ENCODE measurements at regions of chr20 and their contacts with region 1.

Region 1: DNA sequence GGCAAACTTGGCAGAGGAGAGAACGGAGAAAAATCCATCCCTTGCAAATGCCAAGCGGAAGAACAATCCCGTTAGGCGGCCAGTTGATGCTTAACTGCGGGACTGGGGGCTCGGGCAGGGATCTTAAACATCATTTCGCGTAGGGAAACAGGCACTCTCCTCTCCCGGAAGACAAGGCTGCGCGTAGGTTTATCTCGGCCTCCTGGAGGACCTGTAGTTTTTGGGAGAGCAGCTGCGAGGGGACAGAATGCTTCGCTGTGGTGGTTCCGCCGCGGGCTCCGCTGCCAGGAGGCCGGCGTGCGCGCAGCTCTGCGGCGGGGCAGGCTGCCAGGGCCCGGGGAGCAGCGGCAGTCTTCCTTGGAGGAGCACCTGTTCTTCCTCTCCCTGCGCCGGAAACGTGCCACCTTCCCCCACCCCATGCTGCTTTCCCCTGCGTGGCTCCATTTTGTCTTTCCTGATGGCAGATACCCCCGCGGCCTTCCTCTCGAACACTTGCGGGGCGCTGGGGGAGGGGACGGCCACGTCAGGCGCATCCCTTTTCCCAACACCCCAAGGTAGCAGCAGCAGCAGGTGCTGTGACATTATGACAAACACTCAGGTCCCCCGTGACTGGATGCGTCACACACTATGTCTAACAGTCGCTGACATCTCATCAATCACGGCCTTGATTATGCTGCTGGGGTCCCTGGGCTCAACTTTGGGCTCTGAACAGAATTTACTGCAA is 230.7 kb upstream of the BTBD3 start:
- DNase-seq: peak; percentile 55
- H3K4me3 Mint-ChIP-seq: peak overlapping the region; percentile 69
- H3K27ac Mint-ChIP-seq: peak overlapping the region; percentile 81
- H3K4me1 Mint-ChIP-seq: peaks cover 26% of the 10 kb centered on the region
- H3K27me3 Mint-ChIP-seq: no peaks in the 10 kb centered on the region
- CTCF ChIP-seq: no peak

Region 2: DNA sequence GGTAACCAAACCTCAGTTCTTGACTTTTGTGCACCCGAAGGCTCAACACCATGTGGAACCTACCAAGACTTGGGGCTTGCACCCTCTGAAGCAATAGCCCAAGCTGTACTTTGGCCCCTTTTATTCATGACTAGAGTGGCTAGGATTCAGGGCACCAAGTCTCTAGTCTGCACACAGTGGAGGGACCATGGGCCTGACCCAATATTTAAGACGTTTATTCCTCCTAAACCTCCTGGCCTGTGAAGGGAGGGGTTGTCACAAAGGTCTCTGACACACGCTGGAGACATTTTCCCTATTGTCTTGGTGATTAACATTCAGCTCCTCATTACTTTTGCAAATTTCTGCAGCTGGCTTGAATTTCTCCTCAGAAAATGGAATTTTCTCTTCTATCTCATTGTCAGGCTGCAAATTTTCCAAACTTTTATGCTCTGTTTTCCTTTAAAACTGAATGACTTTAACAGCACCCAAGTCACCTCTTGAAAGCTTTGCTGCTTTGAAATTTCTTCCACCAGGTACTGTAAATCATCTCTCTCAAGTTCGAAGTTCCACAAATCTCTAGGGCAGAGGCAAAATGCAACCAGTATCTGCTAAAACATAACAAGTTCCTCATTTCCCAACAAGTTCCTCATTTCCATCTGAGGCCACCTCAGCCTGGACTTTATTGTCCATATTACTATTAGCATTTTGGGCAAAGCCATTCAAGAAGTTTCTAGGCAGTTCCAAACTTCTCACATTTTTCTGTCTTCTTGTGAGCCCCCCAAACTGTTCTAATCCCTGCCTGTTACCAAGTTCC is 250.7 kb before region 1 on chr20:
- CTCF ChIA-PET with region 1: no interaction called
- intact Hi-C with region 1: no loop called
- DNase-seq: no peak
- H3K4me3 Mint-ChIP-seq: no peak overlapping the region
- H3K27ac Mint-ChIP-seq: no peak overlapping the region
- H3K4me1 Mint-ChIP-seq: no peaks in the 10 kb centered on the region
- H3K27me3 Mint-ChIP-seq: no peaks in the 10 kb centered on the region
- CTCF ChIP-seq: no peak

Region 3: GRCh38 chr20:11626551-11626950 is 60.4 kb before region 1 on chr20:
- CTCF ChIA-PET with region 1: no interaction called
- intact Hi-C with region 1: no loop called
- DNase-seq: no peak
- H3K4me3 Mint-ChIP-seq: no peak overlapping the region
- H3K27ac Mint-ChIP-seq: no peak overlapping the region
- H3K4me1 Mint-ChIP-seq: no peaks in the 10 kb centered on the region
- H3K27me3 Mint-ChIP-seq: no peaks in the 10 kb centered on the region
- CTCF ChIP-seq: no peak

Region 4: DNA sequence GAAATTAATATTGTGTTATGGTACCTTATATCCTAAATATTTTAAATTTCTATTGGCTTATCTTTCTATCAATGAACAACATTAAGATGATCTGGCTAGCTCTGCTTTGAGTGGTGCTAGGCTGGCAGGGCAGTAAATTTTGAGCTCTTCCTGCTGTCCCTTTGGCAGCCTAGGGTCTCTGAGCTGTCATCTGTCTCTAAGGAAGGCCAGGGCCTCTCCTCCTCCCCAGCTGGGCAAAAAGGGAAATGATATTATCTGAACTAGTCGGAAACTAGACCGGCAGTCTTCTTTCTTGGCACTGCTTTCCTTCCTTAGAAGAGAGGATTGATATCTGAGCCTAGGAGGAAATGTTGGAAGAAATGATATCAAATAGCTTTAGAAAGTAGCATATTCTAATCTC is 54.0 kb after region 1 on chr20:
- CTCF ChIA-PET with region 1: no interaction called
- intact Hi-C with region 1: loop called (anchors 1 kb)
- DNase-seq: no peak
- H3K4me3 Mint-ChIP-seq: no peak overlapping the region
- H3K27ac Mint-ChIP-seq: no peak overlapping the region
- H3K4me1 Mint-ChIP-seq: no peaks in the 10 kb centered on the region
- H3K27me3 Mint-ChIP-seq: no peaks in the 10 kb centered on the region
- CTCF ChIP-seq: no peak

Region 5: DNA sequence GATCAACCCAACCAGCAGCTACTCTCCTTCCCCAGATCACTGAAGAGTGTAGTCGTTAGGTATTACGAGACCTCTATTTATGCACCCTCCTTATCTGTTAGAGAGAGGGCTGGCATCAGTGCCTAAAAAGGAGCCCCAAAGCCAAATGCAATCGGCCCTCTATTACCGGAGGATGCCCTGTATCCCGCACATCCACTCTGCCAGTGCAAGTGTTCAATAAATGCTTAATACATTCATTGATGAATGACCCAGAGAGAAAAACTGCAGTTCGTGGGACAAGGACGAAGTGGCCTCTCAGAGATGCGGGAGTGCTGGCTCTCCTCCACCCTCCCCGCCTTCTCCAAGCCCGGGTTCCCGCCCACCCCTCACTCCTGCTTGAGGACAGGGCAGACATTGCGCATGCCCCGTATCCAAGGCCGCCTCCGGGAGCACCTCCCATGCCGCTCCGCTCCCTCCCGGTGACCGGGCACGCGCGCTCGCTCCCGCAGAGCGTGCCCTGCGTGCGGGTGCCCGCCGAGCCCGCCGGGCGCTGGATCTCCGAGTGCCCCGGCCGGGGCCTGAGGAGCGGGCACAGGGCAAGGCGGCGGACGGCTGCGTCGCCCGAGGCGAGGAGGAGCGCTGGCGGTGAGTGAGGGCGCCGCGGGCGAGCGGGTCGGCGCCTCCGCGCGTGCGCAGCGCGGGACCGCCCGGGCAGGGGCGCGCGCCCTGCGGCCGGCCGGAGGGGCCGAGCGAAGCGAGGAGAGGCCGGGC is 203.5 kb after region 1 on chr20:
- CTCF ChIA-PET with region 1: interaction called, 3 read pairs
- intact Hi-C with region 1: loop called (anchors 5 kb)
- DNase-seq: peak; percentile 90
- H3K4me3 Mint-ChIP-seq: peak overlapping the region; percentile 89
- H3K27ac Mint-ChIP-seq: no peak overlapping the region
- H3K4me1 Mint-ChIP-seq: peaks cover 9% of the 10 kb centered on the region
- H3K27me3 Mint-ChIP-seq: no peaks in the 10 kb centered on the region
- CTCF ChIP-seq: no peak